HEK293 (cell line): ENCODE measurements at regions of chr15 and their contacts with region 1.

Region 1: GRCh38 chr15:43285609-43286037 is 18.9 kb upstream of the TGM5 start:
- H3K4me3 ChIP-seq: no peak overlapping the region
- H3K27ac ChIP-seq: no peak overlapping the region
- H3K4me1 ChIP-seq: no peaks in the 10 kb centered on the region
- CTCF ChIP-seq: peak; percentile 67

Region 2: DNA sequence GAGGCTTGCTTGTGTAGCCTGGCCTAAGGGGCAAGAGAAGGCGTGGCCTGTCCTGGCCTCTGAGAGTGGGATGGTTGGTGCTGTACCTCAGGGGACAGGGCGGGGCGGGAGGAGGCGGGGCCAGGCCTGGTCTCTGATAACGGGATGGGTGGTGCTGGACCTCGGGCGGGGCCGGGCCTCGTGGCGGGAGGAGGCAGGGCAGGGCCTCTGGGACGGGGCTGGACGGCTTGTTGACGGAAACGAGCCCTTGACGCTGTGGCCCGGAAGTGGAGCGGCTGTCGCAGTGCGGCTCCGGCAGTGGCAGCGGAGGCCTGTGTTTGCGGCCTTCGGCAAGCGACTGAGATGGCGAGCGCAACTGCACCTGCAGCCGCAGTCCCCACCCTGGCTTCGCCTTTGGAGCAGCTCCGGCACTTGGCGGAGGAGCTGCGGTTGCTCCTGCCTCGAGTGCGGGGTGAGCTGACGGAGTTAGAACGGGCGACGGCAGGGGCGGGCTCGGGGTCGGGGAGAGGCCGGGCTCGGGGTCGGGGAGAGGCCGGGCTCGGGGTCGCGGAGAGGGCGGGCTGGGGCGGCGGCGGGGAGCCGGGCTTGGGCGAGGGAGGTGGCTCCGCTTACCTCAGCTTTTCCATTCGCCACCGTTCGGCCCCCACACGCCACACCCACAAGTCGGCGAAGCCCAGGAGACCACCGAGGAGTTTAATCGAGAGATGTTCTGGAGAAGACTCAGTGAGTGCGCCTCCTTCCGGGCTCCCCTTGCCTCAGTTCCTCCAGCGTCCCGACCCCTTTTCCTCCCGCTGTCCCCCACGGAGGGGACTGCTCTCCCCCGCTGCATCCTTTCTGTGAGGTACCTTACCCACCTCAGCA is 100.2 kb before region 1 on chr15 and contains the start of gene CCNDBP1:
- CTCF ChIA-PET with region 1: interaction called, 17 read pairs
- POLR2A ChIA-PET with region 1: no interaction called
- H3K4me3 ChIP-seq: peak within 1 kb of the TSS; percentile 91
- H3K27ac ChIP-seq: peak within 1 kb of the TSS; percentile 59; the same call in 1 of the 2 replicates
- H3K4me1 ChIP-seq: peaks cover 3% of the 10 kb centered on the region; the same call in 1 of the 2 replicates
- CTCF ChIP-seq: peak; percentile 41

Region 3: GRCh38 chr15:43204016-43204901 is 81.4 kb before region 1 on chr15:
- CTCF ChIA-PET with region 1: interaction called, 16 read pairs
- POLR2A ChIA-PET with region 1: no interaction called
- H3K4me3 ChIP-seq: no peak overlapping the region
- H3K27ac ChIP-seq: no peak overlapping the region
- H3K4me1 ChIP-seq: no peaks in the 10 kb centered on the region
- CTCF ChIP-seq: peak; percentile 78

Region 4: DNA sequence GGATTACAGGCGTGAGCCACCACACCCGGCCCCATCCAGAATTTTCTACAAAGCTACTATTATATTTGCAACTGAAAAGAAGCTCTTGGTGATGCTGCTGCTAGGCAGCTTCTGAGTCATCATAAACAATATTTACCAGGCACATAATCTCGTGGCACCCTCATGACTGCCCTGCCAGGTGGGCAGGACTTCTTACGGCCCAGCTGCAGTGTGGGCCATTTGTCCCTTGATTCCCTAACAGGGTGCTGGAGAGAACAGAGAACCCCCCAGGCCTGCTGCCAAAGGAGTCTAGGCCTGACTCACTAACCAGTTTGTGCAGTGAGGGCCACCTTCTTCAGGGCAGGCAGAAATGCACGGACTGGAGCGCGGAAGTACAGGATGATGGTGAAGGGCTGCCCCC is 69.7 kb before region 1 on chr15:
- CTCF ChIA-PET with region 1: interaction called, 10 read pairs
- POLR2A ChIA-PET with region 1: no interaction called
- H3K4me3 ChIP-seq: no peak overlapping the region
- H3K27ac ChIP-seq: no peak overlapping the region
- H3K4me1 ChIP-seq: no peaks in the 10 kb centered on the region
- CTCF ChIP-seq: no peak

Region 5: GRCh38 chr15:43225201-43225949 is 60.2 kb before region 1 on chr15:
- CTCF ChIA-PET with region 1: interaction called, 50 read pairs
- POLR2A ChIA-PET with region 1: no interaction called
- H3K4me3 ChIP-seq: no peak overlapping the region
- H3K27ac ChIP-seq: no peak overlapping the region
- H3K4me1 ChIP-seq: no peaks in the 10 kb centered on the region
- CTCF ChIP-seq: no peak

Region 6: DNA sequence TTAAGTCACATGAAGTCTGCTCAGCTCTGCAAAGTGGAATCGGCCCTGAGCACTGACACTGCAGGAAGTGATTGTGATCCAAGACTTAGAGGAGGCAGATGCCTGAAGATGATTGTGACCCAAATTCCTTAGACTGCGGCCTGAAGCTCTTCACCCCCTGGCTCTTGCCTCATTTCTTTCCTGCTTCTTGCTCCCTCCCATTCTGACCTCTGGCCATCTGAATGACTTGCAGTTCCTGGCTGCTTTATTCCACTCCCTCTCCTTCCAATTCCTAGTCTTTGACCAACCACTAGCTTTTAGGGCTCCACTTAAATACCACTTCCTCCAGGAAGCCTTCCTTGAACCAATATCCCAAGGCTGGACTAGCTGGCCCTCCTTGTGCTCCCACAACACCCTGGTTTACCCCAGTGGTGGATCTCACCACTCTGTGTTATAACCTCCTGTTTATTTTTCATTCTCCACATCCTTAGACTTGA is 54.9 kb before region 1 on chr15:
- CTCF ChIA-PET with region 1: interaction called, 50 read pairs
- POLR2A ChIA-PET with region 1: no interaction called
- H3K4me3 ChIP-seq: no peak overlapping the region
- H3K27ac ChIP-seq: no peak overlapping the region
- H3K4me1 ChIP-seq: no peaks in the 10 kb centered on the region
- CTCF ChIP-seq: no peak

Region 7: GRCh38 chr15:43762824-43763223 is 477.2 kb after region 1 on chr15:
- CTCF ChIA-PET with region 1: no interaction called
- POLR2A ChIA-PET with region 1: no interaction called
- H3K4me3 ChIP-seq: no peak overlapping the region
- H3K27ac ChIP-seq: no peak overlapping the region
- H3K4me1 ChIP-seq: no peaks in the 10 kb centered on the region
- CTCF ChIP-seq: no peak

Region 8: GRCh38 chr15:43939070-43939469 is 653.4 kb after region 1 on chr15:
- CTCF ChIA-PET with region 1: no interaction called
- POLR2A ChIA-PET with region 1: no interaction called
- H3K4me3 ChIP-seq: no peak overlapping the region
- H3K27ac ChIP-seq: no peak overlapping the region
- H3K4me1 ChIP-seq: no peaks in the 10 kb centered on the region
- CTCF ChIP-seq: no peak